CD14-positive monocyte (primary cell): ENCODE measurements at regions of chr2 and their contacts with region 1.

Region 1: GRCh38 chr2:239472235-239472775 is 71.5 kb upstream of the HDAC4 start:
- DNase-seq: no peak
- H3K4me3 ChIP-seq: no peak overlapping the region
- H3K4me3 Mint-ChIP-seq: peak overlapping the region in 1 of 2 donors; percentile 6
- H3K27ac ChIP-seq: no peak overlapping the region
- H3K27ac Mint-ChIP-seq: peak overlapping the region in 2 of 7 donors; percentile 3 to 85
- H3K4me1 ChIP-seq: no peaks in the 10 kb centered on the region
- H3K4me1 Mint-ChIP-seq: peaks cover 3% of the 10 kb centered on the region
- H3K27me3 ChIP-seq: peaks cover 0 to 2% of the 10 kb centered on the region in 2 donors
- H3K27me3 Mint-ChIP-seq: peaks cover 13 to 16% (median 13%) of the 10 kb centered on the region in 3 donors
- CTCF ChIP-seq: no peak

Region 2: GRCh38 chr2:239411549-239412319 is 60.6 kb before region 1 on chr2:
- intact Hi-C with region 1: loop called in 1 of 2 experiments (anchors 10 kb)
- DNase-seq: no peak
- H3K4me3 ChIP-seq: no peak overlapping the region
- H3K4me3 Mint-ChIP-seq: no peak overlapping the region
- H3K27ac ChIP-seq: no peak overlapping the region
- H3K27ac Mint-ChIP-seq: no peak overlapping the region
- H3K4me1 ChIP-seq: no peaks in the 10 kb centered on the region
- H3K4me1 Mint-ChIP-seq: peaks cover 10% of the 10 kb centered on the region
- H3K27me3 ChIP-seq: no peaks in the 10 kb centered on the region
- H3K27me3 Mint-ChIP-seq: peaks cover 0 to 7% (median 2%) of the 10 kb centered on the region in 3 donors
- CTCF ChIP-seq: no peak

Region 3: DNA sequence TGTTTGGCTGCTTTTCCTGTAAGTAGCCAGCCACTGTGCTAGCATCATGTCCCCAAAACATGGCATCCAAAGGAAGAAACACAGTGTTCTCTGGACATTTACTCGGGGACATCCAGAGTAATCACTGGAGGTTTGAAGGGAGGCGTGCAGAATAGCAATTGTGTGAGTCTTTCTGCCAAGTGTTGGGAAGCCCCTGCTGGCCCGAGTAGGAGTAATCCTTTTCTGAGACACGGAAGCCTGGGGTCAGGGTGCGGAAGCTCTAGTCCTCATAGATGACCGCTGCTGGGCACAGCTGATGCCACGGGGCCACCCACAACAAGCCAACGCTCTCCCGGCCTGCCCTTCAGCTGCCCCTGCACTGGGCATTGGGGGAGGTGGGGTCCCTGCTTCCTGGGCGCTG is 46.7 kb before region 1 on chr2:
- intact Hi-C with region 1: no loop called
- DNase-seq: no peak
- H3K4me3 ChIP-seq: no peak overlapping the region
- H3K4me3 Mint-ChIP-seq: no peak overlapping the region
- H3K27ac ChIP-seq: no peak overlapping the region
- H3K27ac Mint-ChIP-seq: no peak overlapping the region
- H3K4me1 ChIP-seq: no peaks in the 10 kb centered on the region
- H3K4me1 Mint-ChIP-seq: no peaks in the 10 kb centered on the region
- H3K27me3 ChIP-seq: no peaks in the 10 kb centered on the region
- H3K27me3 Mint-ChIP-seq: peaks cover 2 to 15% (median 6%) of the 10 kb centered on the region in 3 donors
- CTCF ChIP-seq: no peak

Region 4: GRCh38 chr2:239959059-239959971 is 487.0 kb after region 1 on chr2:
- intact Hi-C with region 1: no loop called
- DNase-seq: no peak
- H3K4me3 ChIP-seq: no peak overlapping the region
- H3K4me3 Mint-ChIP-seq: peak overlapping the region in 1 of 2 donors; percentile 20
- H3K27ac ChIP-seq: no peak overlapping the region
- H3K27ac Mint-ChIP-seq: peak overlapping the region in 1 of 7 donors; percentile 53
- H3K4me1 ChIP-seq: no peaks in the 10 kb centered on the region
- H3K4me1 Mint-ChIP-seq: no peaks in the 10 kb centered on the region
- H3K27me3 ChIP-seq: no peaks in the 10 kb centered on the region
- H3K27me3 Mint-ChIP-seq: no peaks in the 10 kb centered on the region
- CTCF ChIP-seq: no peak

Region 5: GRCh38 chr2:240189686-240190085 is 717.4 kb after region 1 on chr2:
- intact Hi-C with region 1: no loop called
- DNase-seq: no peak
- H3K4me3 ChIP-seq: no peak overlapping the region
- H3K4me3 Mint-ChIP-seq: no peak overlapping the region
- H3K27ac ChIP-seq: no peak overlapping the region
- H3K27ac Mint-ChIP-seq: no peak overlapping the region
- H3K4me1 ChIP-seq: no peaks in the 10 kb centered on the region
- H3K4me1 Mint-ChIP-seq: no peaks in the 10 kb centered on the region
- H3K27me3 ChIP-seq: no peaks in the 10 kb centered on the region
- H3K27me3 Mint-ChIP-seq: peaks cover 7 to 11% (median 8%) of the 10 kb centered on the region in 3 donors
- CTCF ChIP-seq: no peak